ENCODE measurements at regions of chr6 and their contacts with region 1.

Region 1: GRCh38 chr6:169701954-169702839 is at the starts of genes C6orf120 and WDR27:
- DNase-seq: peak; percentile 97
- H3K4me3 Mint-ChIP-seq: peak within 1 kb of the TSS; percentile 89
- H3K27ac Mint-ChIP-seq: peak within 1 kb of the TSS; percentile 86
- H3K4me1 Mint-ChIP-seq: peaks cover 56% of the 10 kb centered on the region
- H3K27me3 Mint-ChIP-seq: no peaks in the 10 kb centered on the region
- total RNA-seq, gene C6orf120: 19.2 to 19.6 TPM
- total RNA-seq, gene WDR27: 24.9 to 25.2 TPM

Region 2: GRCh38 chr6:169577974-169578373 is 124.2 kb before region 1 on chr6:
- CTCF ChIA-PET with region 1: no interaction called
- POLR2A ChIA-PET with region 1: no interaction called
- DNase-seq: no peak
- H3K4me3 Mint-ChIP-seq: no peak overlapping the region
- H3K27ac Mint-ChIP-seq: no peak overlapping the region
- H3K4me1 Mint-ChIP-seq: no peaks in the 10 kb centered on the region
- H3K27me3 Mint-ChIP-seq: no peaks in the 10 kb centered on the region

Region 3: GRCh38 chr6:169723200-169723909 is 21.2 kb after region 1 on chr6:
- CTCF ChIA-PET with region 1: interaction called, 14 read pairs
- POLR2A ChIA-PET with region 1: interaction called, 135 read pairs
- DNase-seq: peak; percentile 66
- H3K4me3 Mint-ChIP-seq: peak overlapping the region; percentile 85
- H3K27ac Mint-ChIP-seq: peak overlapping the region; percentile 95
- H3K4me1 Mint-ChIP-seq: peaks cover 43% of the 10 kb centered on the region
- H3K27me3 Mint-ChIP-seq: peaks cover 2% of the 10 kb centered on the region

Region 4: GRCh38 chr6:169789982-169790927 is 88.1 kb after region 1 on chr6:
- CTCF ChIA-PET with region 1: interaction called, 13 read pairs
- POLR2A ChIA-PET with region 1: interaction called, 9 read pairs
- DNase-seq: peak; percentile 79
- H3K4me3 Mint-ChIP-seq: peak overlapping the region; percentile 75
- H3K27ac Mint-ChIP-seq: no peak overlapping the region
- H3K4me1 Mint-ChIP-seq: peaks cover 22% of the 10 kb centered on the region
- H3K27me3 Mint-ChIP-seq: peaks cover 27% of the 10 kb centered on the region

Region 5: DNA sequence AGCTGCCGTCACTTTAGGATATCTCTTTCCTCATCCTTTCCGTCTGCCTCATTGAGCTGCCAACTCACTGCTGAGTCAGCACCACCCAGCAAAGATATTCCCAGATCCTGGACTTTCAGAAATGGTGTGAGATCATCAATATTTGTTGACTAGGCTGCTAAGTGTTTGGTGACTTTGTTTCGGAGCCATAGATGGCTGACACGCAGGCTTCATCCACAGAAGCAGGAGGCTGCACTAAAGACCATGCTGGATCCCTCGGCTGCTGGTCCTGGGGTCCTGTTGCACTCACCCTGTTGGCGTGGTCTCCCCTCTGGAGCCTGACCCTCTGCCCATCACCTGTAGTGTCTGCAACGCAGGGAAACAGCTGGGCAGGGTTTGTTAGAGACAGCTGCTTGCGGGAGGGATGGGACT is 145.7 kb after region 1 on chr6:
- CTCF ChIA-PET with region 1: no interaction called
- POLR2A ChIA-PET with region 1: no interaction called
- DNase-seq: no peak
- H3K4me3 Mint-ChIP-seq: no peak overlapping the region
- H3K27ac Mint-ChIP-seq: no peak overlapping the region
- H3K4me1 Mint-ChIP-seq: no peaks in the 10 kb centered on the region
- H3K27me3 Mint-ChIP-seq: peaks cover 4% of the 10 kb centered on the region